Caco-2 (cell line): ENCODE measurements at regions of chr17 and their contacts with region 1.

Region 1: DNA sequence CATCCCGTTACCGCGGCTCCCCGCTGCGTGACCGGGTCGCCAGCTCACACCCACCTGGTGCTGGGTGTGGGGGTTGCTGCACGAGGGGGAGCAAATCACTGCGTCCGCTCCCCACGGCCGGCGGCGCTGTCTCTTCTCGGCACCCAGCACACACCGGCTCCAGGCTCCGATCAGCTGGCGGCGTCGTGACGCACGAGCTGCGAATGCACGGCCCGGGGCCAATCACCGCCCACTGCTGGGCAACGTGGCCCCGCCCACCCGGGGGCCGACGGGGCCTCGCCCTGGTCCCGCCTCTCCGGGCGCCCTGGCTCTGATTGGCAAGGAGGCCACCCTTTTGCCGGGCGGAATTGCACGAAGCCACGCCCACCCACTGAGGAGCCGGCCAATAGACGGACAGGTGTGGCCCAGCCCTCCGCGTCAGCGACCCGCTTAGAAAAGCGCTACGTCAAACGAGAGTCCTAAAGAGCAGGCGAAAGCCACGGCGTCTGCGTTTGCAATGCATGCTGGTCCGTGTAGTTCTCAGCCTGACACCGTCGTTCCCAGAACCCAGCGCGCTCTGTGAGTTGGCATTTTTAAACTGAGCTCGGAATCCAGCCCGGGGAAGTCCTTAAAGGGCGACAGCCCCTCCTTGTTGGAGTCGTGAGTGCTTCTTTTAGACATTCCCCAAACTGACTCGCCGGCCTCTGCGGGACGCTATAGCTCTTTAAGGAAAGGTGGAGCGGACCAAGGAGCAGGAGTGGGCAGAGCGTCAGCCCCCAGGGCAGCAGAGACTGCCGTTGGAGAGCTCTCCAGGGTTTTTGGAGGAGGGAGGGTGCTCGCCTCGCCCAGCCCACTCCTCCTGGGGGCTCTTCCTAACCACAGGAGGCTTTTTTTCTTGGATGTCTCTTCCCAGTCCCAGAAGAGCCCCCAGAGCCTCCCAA is 6.2 kb upstream of the TLCD2 start:
- DNase-seq: peak; percentile 100
- H3K4me3 ChIP-seq: peak overlapping the region; percentile 94
- H3K4me3 Mint-ChIP-seq: peak overlapping the region; percentile 85
- H3K27ac Mint-ChIP-seq: peak overlapping the region; percentile 99
- H3K4me1 ChIP-seq: peaks cover 29% of the 10 kb centered on the region
- H3K4me1 Mint-ChIP-seq: peaks cover 38% of the 10 kb centered on the region
- H3K27me3 ChIP-seq: no peaks in the 10 kb centered on the region
- H3K27me3 Mint-ChIP-seq: no peaks in the 10 kb centered on the region
- CTCF ChIP-seq: no peak

Region 2: GRCh38 chr17:1628856-1629646 is 87.3 kb before region 1 on chr17:
- CTCF ChIA-PET with region 1: interaction called, 7 read pairs
- POLR2A ChIA-PET with region 1: interaction called, 16 read pairs
- intact Hi-C with region 1: no loop called
- DNase-seq: peak; percentile 97 to 99
- H3K4me3 ChIP-seq: peak overlapping the region; percentile 90
- H3K4me3 Mint-ChIP-seq: peak overlapping the region; percentile 95
- H3K27ac Mint-ChIP-seq: peak overlapping the region; percentile 95
- H3K4me1 ChIP-seq: peaks cover 31% of the 10 kb centered on the region
- H3K4me1 Mint-ChIP-seq: peaks cover 23% of the 10 kb centered on the region
- H3K27me3 ChIP-seq: no peaks in the 10 kb centered on the region
- H3K27me3 Mint-ChIP-seq: peaks cover 2% of the 10 kb centered on the region
- CTCF ChIP-seq: peak in 1 of 2 experiments; percentile 38

Region 3: DNA sequence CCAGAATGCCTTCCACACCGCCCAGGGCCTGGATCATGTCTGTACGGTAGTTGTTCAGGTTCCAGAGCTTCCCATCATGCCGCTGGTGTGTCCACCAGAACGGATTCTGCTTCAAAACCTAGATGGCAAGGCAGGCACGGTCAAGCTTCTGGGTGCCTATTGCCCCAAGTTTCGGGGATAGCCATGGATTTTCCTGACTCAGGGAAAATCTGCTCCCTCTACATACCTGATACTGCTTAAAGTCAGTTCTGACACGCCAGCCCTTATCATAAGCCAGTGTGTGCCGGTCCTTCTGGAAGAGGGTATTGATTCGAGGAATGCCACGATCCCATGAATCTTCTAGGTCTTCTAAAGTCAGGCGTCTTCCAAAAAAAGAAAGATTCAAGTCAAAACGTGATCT is 55.3 kb before region 1 on chr17:
- CTCF ChIA-PET with region 1: no interaction called
- POLR2A ChIA-PET with region 1: interaction called, 10 read pairs
- intact Hi-C with region 1: no loop called
- DNase-seq: no peak
- H3K4me3 ChIP-seq: no peak overlapping the region
- H3K4me3 Mint-ChIP-seq: no peak overlapping the region
- H3K27ac Mint-ChIP-seq: no peak overlapping the region
- H3K4me1 ChIP-seq: no peaks in the 10 kb centered on the region
- H3K4me1 Mint-ChIP-seq: no peaks in the 10 kb centered on the region
- H3K27me3 ChIP-seq: no peaks in the 10 kb centered on the region
- H3K27me3 Mint-ChIP-seq: no peaks in the 10 kb centered on the region
- CTCF ChIP-seq: no peak

Region 4: GRCh38 chr17:1684378-1685189 is 31.8 kb before region 1 on chr17 and contains the start of gene PRPF8:
- CTCF ChIA-PET with region 1: no interaction called
- POLR2A ChIA-PET with region 1: interaction called, 30 read pairs
- intact Hi-C with region 1: loop called (anchors 2 kb)
- DNase-seq: peak; percentile 98 to 99
- H3K4me3 ChIP-seq: peak within 1 kb of the TSS; percentile 54
- H3K4me3 Mint-ChIP-seq: peak within 1 kb of the TSS; percentile 91
- H3K27ac Mint-ChIP-seq: peak within 1 kb of the TSS; percentile 95
- H3K4me1 ChIP-seq: peaks cover 5% of the 10 kb centered on the region; the same call in 1 of the 2 replicates
- H3K4me1 Mint-ChIP-seq: peaks cover 13% of the 10 kb centered on the region
- H3K27me3 ChIP-seq: no peaks in the 10 kb centered on the region
- H3K27me3 Mint-ChIP-seq: no peaks in the 10 kb centered on the region
- CTCF ChIP-seq: no peak
- total RNA-seq, gene PRPF8: 398 and 430 TPM in 2 replicates

Region 5: GRCh38 chr17:1736348-1737281 is 20.3 kb after region 1 on chr17:
- CTCF ChIA-PET with region 1: interaction called, 17 read pairs
- POLR2A ChIA-PET with region 1: interaction called, 21 read pairs
- intact Hi-C with region 1: no loop called
- DNase-seq: peak; percentile 82 to 88
- H3K4me3 ChIP-seq: no peak overlapping the region
- H3K4me3 Mint-ChIP-seq: peak overlapping the region; percentile 24
- H3K27ac Mint-ChIP-seq: peak overlapping the region; percentile 75
- H3K4me1 ChIP-seq: peaks cover 23% of the 10 kb centered on the region
- H3K4me1 Mint-ChIP-seq: peaks cover 18% of the 10 kb centered on the region
- H3K27me3 ChIP-seq: no peaks in the 10 kb centered on the region
- H3K27me3 Mint-ChIP-seq: no peaks in the 10 kb centered on the region
- CTCF ChIP-seq: no peak

Region 6: DNA sequence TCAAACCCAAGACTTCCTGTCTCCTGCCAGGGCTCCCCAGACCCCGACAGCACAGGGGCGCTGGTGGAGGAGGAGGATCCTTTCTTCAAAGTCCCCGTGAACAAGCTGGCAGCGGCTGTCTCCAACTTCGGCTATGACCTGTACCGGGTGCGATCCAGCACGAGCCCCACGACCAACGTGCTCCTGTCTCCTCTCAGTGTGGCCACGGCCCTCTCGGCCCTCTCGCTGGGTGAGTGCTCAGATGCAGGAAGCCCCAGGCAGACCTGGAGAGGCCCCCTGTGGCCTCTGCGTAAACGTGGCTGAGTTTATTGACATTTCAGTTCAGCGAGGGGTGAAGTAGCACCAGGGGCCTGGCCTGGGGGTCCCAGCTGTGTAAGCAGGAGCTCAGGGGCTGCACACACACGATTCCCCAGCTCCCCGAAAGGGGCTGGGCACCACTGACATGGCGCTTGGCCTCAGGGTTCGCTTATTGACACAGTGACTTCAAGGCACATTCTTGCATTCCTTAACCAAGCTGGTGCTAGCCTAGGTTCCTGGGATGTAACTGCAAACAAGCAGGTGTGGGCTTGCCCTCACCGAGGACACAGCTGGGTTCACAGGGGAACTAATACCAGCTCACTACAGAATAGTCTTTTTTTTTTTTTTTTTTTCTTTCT is 53.6 kb after region 1 on chr17:
- CTCF ChIA-PET with region 1: interaction called, 19 read pairs
- POLR2A ChIA-PET with region 1: interaction called, 81 read pairs
- intact Hi-C with region 1: loop called (anchors 2 kb)
- DNase-seq: peak; percentile 91 to 96
- H3K4me3 ChIP-seq: no peak overlapping the region
- H3K4me3 Mint-ChIP-seq: peak overlapping the region; percentile 47
- H3K27ac Mint-ChIP-seq: peak overlapping the region; percentile 98
- H3K4me1 ChIP-seq: peaks cover 32% of the 10 kb centered on the region
- H3K4me1 Mint-ChIP-seq: peaks cover 14% of the 10 kb centered on the region
- H3K27me3 ChIP-seq: no peaks in the 10 kb centered on the region
- H3K27me3 Mint-ChIP-seq: no peaks in the 10 kb centered on the region
- CTCF ChIP-seq: no peak

Region 7: GRCh38 chr17:1829592-1830257 is 113.4 kb after region 1 on chr17 and contains the starts of genes RPA1 and SMYD4:
- CTCF ChIA-PET with region 1: interaction called, 4 read pairs
- POLR2A ChIA-PET with region 1: interaction called, 14 read pairs
- intact Hi-C with region 1: no loop called
- DNase-seq: peak; percentile 86 to 94
- H3K4me3 ChIP-seq: peak within 1 kb of the TSS; percentile 97
- H3K4me3 Mint-ChIP-seq: peak within 1 kb of the TSS; percentile 96
- H3K27ac Mint-ChIP-seq: peak within 1 kb of the TSS; percentile 67
- H3K4me1 ChIP-seq: no peaks in the 10 kb centered on the region
- H3K4me1 Mint-ChIP-seq: peaks cover 22% of the 10 kb centered on the region
- H3K27me3 ChIP-seq: no peaks in the 10 kb centered on the region
- H3K27me3 Mint-ChIP-seq: no peaks in the 10 kb centered on the region
- CTCF ChIP-seq: no peak
- total RNA-seq, gene RPA1: 147 and 167 TPM in 2 replicates
- total RNA-seq, gene SMYD4: 26.2 and 32.1 TPM in 2 replicates